Heart left ventricle (tissue), 16 donors: ENCODE measurements at regions of chr5 and their contacts with region 1.

Region 1: GRCh38 chr5:139651853-139652787 is 4.0 kb downstream of the CXXC5 start:
- DNase-seq: peak; percentile 76 to 82 (median 80)
- ATAC-seq: peak; percentile 1 to 42 (median 21)
- H3K4me3 ChIP-seq: peak overlapping the region in 9 of 12 donors; percentile 11 to 98 (median 66)
- H3K27ac ChIP-seq: peak overlapping the region; percentile 82 to 98 (median 92)
- H3K4me1 ChIP-seq: peaks cover 18 to 91% (median 74%) of the 10 kb centered on the region in 12 donors
- H3K27me3 ChIP-seq: peaks cover 0 to 9% (median 0%) of the 10 kb centered on the region in 9 donors
- CTCF ChIP-seq: no peak
- POLR2A ChIP-seq: peak in 1 of 2 donors; percentile 13

Region 2: DNA sequence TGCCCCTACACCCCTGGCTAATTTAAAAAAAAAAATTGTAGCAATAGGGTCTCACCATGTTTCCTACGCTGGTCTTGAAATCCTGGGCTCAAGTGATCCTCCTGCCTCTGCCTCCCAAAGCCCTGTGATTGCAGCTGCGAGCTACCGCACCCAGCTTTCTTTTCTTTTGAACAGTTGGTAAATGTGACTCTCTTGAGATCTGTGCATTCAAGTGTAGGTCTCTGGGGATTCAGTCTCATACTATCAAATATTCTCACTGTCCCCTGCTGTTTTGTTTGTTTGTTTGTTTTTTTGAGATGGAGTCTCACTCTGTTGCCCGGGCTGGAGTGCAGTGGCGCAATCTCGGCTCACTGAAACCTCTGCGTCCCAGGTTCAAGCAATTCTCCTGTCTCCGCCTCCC is 46.2 kb before region 1 on chr5:
- intact Hi-C with region 1: no loop called
- DNase-seq: no peak
- ATAC-seq: no peak
- H3K4me3 ChIP-seq: no peak overlapping the region
- H3K27ac ChIP-seq: no peak overlapping the region
- H3K4me1 ChIP-seq: peaks cover 0 to 9% (median 0%) of the 10 kb centered on the region in 12 donors
- H3K27me3 ChIP-seq: no peaks in the 10 kb centered on the region
- CTCF ChIP-seq: no peak
- POLR2A ChIP-seq: no peak

Region 3: DNA sequence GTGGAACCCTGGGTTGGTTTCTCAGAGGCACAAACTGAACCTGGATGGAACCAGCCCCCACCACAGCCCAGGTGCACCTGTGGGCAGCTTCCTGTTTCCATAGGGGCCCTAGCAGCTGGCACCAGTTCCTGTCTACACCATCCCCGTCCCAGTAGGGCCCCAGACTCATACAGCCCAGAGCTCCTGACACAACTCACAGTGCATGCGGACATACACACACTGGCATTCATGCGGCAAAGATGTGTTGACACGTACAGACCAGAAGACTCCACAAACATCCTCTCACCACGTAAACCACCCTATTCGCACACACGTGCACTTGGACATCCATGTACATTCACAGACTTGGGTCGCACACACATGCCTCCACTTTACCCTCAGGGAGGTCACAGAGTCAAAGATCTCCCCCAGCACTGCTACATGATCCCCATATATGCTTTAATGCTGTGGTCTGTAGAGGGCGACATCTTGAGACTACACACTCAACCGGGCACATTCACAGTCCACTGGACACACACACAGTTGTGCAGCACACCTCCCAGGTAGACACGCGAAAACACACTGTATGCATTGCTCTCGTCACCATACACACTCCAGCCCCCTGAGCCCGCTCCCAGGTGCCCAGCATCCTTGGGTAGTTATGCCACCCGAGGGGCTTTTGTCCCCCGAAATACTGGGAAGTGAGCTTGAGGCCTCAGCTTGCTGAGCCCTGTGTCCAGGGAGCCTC is 18.4 kb after region 1 on chr5:
- intact Hi-C with region 1: loop called in 1 of 10 experiments (anchors 1 kb)
- DNase-seq: peak in 1 of 5 donors; percentile 29
- ATAC-seq: peak in 3 of 4 donors; percentile 9 to 33 (median 27)
- H3K4me3 ChIP-seq: peak overlapping the region in 9 of 12 donors; percentile 49 to 67 (median 61)
- H3K27ac ChIP-seq: peak overlapping the region; percentile 93 to 98 (median 95)
- H3K4me1 ChIP-seq: peaks cover 18 to 100% (median 91%) of the 10 kb centered on the region in 12 donors
- H3K27me3 ChIP-seq: no peaks in the 10 kb centered on the region
- CTCF ChIP-seq: peak in 6 of 12 donors; percentile 22 to 47 (median 28)
- POLR2A ChIP-seq: no peak

Region 4: DNA sequence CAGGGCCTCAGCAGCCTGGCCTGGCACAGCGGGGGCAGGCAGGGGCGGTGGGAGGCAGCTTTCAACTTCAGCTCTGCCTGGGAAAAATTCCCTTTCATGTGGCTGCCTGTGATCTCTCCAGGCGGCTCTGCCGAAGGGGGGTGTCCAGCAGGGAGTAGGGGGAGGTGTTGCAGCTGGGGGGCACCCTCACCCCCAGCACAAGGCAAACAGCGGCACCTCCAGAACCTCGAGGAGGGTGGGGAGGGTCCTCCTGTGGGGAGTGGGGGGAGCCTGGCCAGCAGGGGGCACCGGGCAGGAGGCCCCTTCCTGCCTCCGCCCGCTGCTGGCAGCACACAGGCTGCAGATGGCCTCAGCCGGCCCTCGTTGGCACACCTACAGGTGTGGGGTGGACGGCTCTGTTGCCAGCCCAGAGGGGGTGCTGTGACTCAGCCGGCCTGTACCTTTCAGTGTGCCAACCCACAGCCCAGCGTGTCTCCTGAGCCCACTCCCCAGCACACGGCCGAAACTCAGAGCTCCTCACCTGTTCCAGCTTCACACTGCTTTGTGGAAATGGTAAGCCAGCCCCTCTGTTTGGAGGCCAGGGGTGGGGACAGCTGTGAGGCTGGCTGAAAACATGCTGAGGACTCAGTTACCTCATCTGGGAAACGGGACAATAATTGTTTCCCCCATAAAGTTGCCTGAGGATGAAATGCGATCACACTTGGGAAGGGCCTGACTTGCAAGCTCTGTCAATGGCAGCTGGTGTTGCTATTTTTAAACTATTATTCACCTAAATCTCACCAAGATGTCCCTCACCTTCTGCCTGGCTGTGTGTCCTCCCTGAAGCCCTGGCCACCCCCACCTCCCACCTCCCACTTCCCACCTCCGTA is 33.0 kb after region 1 on chr5:
- intact Hi-C with region 1: loop called in 4 of 10 experiments (anchors 2 to 5 kb)
- DNase-seq: peak in 3 of 5 donors; percentile 49 to 77 (median 71)
- ATAC-seq: peak; percentile 61 to 80 (median 62)
- H3K4me3 ChIP-seq: no peak overlapping the region
- H3K27ac ChIP-seq: peak overlapping the region in 11 of 12 donors; percentile 27 to 83 (median 66)
- H3K4me1 ChIP-seq: peaks cover 0 to 68% (median 25%) of the 10 kb centered on the region in 12 donors
- H3K27me3 ChIP-seq: no peaks in the 10 kb centered on the region
- CTCF ChIP-seq: peak in 7 of 12 donors; percentile 2 to 43 (median 16)
- POLR2A ChIP-seq: no peak

Region 5: DNA sequence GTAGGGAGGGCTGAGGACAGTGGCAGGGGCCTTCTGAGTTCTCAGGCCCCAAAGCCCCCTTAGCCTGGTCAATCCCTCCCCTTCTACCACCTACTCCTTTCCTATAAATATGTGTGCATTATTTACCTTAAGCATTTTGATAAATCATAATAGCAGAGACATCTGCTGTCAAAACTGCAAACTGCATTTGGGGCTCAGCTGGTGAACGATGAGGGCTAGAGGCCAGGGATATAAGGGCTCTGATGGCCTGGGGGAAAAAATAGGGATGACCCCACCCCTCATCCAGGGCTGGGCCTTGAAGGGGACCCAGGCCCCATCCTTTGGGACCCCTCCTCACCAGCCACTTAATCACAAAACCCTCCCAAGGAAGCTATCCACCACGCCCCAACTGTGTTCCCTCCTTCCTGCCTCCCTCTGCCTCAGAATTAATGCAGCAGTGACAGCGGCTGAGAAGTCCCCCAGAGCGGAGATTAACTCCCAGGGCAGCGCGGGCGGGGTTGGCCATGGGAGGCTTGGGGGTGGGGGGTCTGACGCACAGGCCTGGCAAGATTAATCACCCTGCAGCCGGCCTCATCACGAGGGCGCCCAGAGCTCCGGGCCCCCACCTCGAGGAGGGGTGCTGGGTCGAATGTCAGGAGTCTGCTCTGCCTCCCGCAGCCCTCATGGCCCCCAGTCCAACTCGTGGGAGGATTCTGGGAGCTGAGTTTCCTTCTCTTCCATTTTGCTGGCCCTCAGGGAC is 38.1 kb after region 1 on chr5:
- intact Hi-C with region 1: loop called in 4 of 10 experiments (anchors 2 to 5 kb)
- DNase-seq: peak in 2 of 5 donors; percentile 49 to 56
- ATAC-seq: peak in 3 of 4 donors; percentile 1 to 40 (median 18)
- H3K4me3 ChIP-seq: no peak overlapping the region
- H3K27ac ChIP-seq: peak overlapping the region in 8 of 12 donors; percentile 16 to 64 (median 31)
- H3K4me1 ChIP-seq: peaks cover 0 to 76% (median 42%) of the 10 kb centered on the region in 12 donors
- H3K27me3 ChIP-seq: no peaks in the 10 kb centered on the region
- CTCF ChIP-seq: peak; percentile 13 to 74 (median 62)
- POLR2A ChIP-seq: no peak